ENCODE measurements at regions of chr9 and their contacts with region 1.

Region 1: DNA sequence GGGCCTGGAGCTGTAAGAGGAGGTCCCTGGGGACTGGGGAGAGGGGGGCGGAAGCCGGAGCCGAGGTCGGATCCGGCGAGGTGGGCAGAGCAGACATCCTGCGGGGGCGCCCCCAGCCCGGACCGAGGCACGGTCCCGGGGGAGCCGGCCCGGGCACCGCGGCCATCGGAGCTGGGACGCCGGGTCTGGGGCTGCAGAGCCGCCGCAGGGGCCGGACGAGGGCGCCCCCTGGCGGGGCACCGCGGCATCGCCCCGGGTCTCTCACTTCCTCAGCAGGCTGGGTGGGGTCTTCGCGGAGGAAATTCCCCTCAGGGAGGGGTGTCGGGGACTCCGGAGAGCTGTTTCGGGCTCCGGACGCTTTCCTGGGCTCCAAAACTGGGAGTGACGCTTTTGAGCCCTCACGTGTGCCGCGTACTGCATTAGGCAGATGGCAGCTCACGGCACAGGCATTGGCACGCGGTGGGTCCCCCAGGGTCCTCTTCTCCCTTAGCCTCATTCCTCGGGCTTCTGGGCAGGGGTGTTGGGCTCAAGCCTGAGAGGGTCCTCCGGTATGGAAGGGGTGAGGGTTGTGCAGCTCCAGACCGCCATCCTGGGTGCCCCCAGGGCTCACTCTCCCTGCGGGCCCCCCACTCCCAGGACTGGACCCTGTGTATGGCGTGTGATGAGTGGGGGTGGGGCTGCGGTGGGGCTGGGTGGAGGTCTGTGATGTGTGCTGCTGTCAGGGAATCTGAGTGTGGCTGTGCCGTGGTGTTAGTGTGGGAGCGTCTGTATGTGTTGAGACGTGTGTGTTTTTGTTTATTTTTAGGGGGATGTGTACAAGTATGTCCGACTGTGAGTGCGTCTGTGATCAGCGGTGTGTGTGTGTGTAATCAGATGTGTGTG is 29.6 kb downstream of the LHX2 start:
- DNase-seq: peak; percentile 59 to 63 (median 63)
- ATAC-seq: peak; percentile 73 to 83 (median 80)
- H3K4me3 ChIP-seq: peak overlapping the region; percentile 32 to 40 (median 36)
- H3K27ac ChIP-seq: no peak overlapping the region
- H3K4me1 ChIP-seq: peaks cover 0 to 21% (median 2%) of the 10 kb centered on the region in 4 donors
- H3K27me3 ChIP-seq: no peaks in the 10 kb centered on the region
- CTCF ChIP-seq: peak; percentile 95 to 99 (median 97)
- POLR2A ChIP-seq: no peak

Region 2: GRCh38 chr9:123544007-123544827 is 497.0 kb before region 1 on chr9:
- intact Hi-C with region 1: loop called in 1 of 2 experiments (anchors 10 kb)
- DNase-seq: no peak
- ATAC-seq: peak; percentile 46 to 65 (median 58)
- H3K4me3 ChIP-seq: no peak overlapping the region
- H3K27ac ChIP-seq: no peak overlapping the region
- H3K4me1 ChIP-seq: peaks cover 0 to 10% (median 0%) of the 10 kb centered on the region in 4 donors
- H3K27me3 ChIP-seq: no peaks in the 10 kb centered on the region
- CTCF ChIP-seq: peak; percentile 76 to 88 (median 80)
- POLR2A ChIP-seq: no peak

Region 3: GRCh38 chr9:123550797-123551196 is 490.4 kb before region 1 on chr9:
- intact Hi-C with region 1: loop called (anchors 10 kb)
- DNase-seq: no peak
- ATAC-seq: no peak
- H3K4me3 ChIP-seq: no peak overlapping the region
- H3K27ac ChIP-seq: no peak overlapping the region
- H3K4me1 ChIP-seq: no peaks in the 10 kb centered on the region
- H3K27me3 ChIP-seq: no peaks in the 10 kb centered on the region
- CTCF ChIP-seq: no peak
- POLR2A ChIP-seq: no peak

Region 4: DNA sequence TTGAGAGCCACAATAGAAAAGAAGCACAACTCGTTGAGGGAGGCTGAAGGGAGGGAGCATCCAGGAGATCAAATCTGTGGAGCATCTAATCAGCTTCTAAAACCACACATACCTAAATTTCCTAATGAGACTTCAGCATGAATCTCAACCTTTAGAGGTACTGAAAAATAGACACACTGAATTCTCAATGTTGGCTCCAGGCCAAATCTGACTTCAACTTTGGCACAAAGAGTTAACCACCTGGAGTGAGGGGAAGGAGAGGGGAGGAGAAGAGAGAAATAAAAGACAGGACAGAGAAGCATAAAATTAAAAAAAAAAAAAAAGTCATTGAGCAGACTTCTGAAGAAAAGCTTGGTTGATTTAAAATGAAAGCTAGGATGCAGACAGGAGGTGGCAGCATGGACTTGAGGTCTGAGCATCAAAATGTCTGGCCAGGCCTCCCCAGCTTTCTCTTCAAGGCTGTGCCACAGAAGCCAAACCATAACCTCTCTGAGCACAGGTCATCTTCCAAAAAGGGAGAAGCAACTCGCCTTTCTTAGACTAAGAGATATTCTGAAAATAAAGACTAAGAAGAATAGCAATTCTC is 316.9 kb before region 1 on chr9:
- intact Hi-C with region 1: loop called in 1 of 2 experiments (anchors 10 kb)
- DNase-seq: no peak
- ATAC-seq: peak; percentile 73 to 83 (median 74)
- H3K4me3 ChIP-seq: no peak overlapping the region
- H3K27ac ChIP-seq: no peak overlapping the region
- H3K4me1 ChIP-seq: peaks cover 0 to 17% (median 5%) of the 10 kb centered on the region in 4 donors
- H3K27me3 ChIP-seq: no peaks in the 10 kb centered on the region
- CTCF ChIP-seq: peak; percentile 24 to 45 (median 38)
- POLR2A ChIP-seq: no peak

Region 5: GRCh38 chr9:124110307-124110915 is 69.2 kb after region 1 on chr9:
- intact Hi-C with region 1: no loop called
- DNase-seq: peak in 1 of 3 donors; percentile 44
- ATAC-seq: peak; percentile 47 to 88 (median 77)
- H3K4me3 ChIP-seq: no peak overlapping the region
- H3K27ac ChIP-seq: no peak overlapping the region
- H3K4me1 ChIP-seq: no peaks in the 10 kb centered on the region
- H3K27me3 ChIP-seq: no peaks in the 10 kb centered on the region
- CTCF ChIP-seq: no peak
- POLR2A ChIP-seq: no peak

Measured in right lobe of liver (tissue), 6 donors.